HepG2 (cell line): ENCODE measurements at regions of chr15 and their contacts with region 1.

Region 1: GRCh38 chr15:88649753-88650551 is 11.1 kb downstream of the ISG20 start:
- DNase-seq: no peak
- ATAC-seq: no peak
- H3K4me3 ChIP-seq: no peak overlapping the region
- H3K27ac ChIP-seq: no peak overlapping the region
- H3K4me1 ChIP-seq: peaks cover 7% of the 10 kb centered on the region; the same call in 1 of the 2 replicates
- H3K27me3 ChIP-seq: no peaks in the 10 kb centered on the region; a peak in 1 of 5 replicates
- CTCF ChIP-seq: no peak
- EP300 ChIP-seq: no peak
- POLR2A ChIP-seq: no peak
- RAD21 ChIP-seq: no peak

Region 2: GRCh38 chr15:88828791-88829190 is 178.8 kb after region 1 on chr15:
- CTCF ChIA-PET with region 1: no interaction called
- POLR2A ChIA-PET with region 1: no interaction called
- in situ Hi-C with region 1: loop called (anchors 5 kb)
- intact Hi-C with region 1: no loop called
- DNase-seq: no peak
- ATAC-seq: no peak
- H3K4me3 ChIP-seq: no peak overlapping the region
- H3K27ac ChIP-seq: no peak overlapping the region
- H3K4me1 ChIP-seq: no peaks in the 10 kb centered on the region
- H3K27me3 ChIP-seq: peaks cover 3 to 14% of the 10 kb centered on the region in 2 experiments; a peak in 4 of 5 replicates
- CTCF ChIP-seq: no peak
- EP300 ChIP-seq: no peak
- POLR2A ChIP-seq: no peak
- RAD21 ChIP-seq: no peak